Activated CD4-positive, alpha-beta T cell treated with anti-CD3 and anti-CD28 coated beads, Interleukin-2, amount 10 ng/mL, durations not matched to agents 24 days and 14 days (primary cell): ENCODE measurements at regions of chrX and their contacts with region 1.

Region 1: DNA sequence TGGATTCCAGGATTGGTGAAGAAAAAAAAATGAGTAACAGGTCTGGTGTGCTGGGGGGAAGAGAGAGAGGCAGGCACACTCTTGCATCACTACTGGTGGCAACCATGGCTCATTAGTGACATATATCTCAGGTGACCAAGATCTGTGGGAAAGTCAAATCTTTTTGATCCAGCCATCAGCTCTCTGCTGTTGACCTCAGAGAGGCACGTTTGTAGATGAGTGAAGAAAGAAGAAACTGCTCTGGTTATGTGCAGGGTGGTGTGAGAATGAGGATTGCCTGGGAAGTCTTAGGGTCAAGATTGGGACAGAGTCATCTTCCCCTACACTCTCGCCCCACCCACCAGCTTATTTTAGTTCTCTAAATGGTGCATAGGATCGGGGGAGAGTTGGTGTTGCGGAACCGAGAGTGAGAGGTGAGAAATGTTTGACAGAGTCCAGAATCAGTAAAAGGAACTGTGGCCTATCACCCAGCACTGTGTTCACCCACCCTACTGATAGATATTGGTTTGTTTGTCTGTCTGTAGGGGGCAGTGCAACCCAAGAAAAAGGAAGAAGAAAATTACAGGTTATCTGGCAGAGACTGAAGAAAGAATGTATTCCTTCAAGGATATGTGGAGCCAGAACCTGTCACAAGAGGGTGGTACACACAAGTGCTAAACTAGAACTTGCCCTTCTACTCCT is 21.9 kb downstream of the ARMCX6 start:
- DNase-seq: peak; percentile 82
- H3K4me3 Mint-ChIP-seq: no peak overlapping the region
- H3K27ac Mint-ChIP-seq: no peak overlapping the region
- H3K4me1 Mint-ChIP-seq: peaks cover 2% of the 10 kb centered on the region
- H3K27me3 Mint-ChIP-seq: peaks cover 5% of the 10 kb centered on the region

Region 2: GRCh38 chrX:101415180-101416145 is 180.4 kb before region 1 on chrX:
- intact Hi-C with region 1: loop called (anchors 5 kb)
- DNase-seq: peak; percentile 83
- H3K4me3 Mint-ChIP-seq: peak overlapping the region; percentile 56
- H3K27ac Mint-ChIP-seq: peak overlapping the region; percentile 86
- H3K4me1 Mint-ChIP-seq: peaks cover 38% of the 10 kb centered on the region
- H3K27me3 Mint-ChIP-seq: no peaks in the 10 kb centered on the region

Region 3: DNA sequence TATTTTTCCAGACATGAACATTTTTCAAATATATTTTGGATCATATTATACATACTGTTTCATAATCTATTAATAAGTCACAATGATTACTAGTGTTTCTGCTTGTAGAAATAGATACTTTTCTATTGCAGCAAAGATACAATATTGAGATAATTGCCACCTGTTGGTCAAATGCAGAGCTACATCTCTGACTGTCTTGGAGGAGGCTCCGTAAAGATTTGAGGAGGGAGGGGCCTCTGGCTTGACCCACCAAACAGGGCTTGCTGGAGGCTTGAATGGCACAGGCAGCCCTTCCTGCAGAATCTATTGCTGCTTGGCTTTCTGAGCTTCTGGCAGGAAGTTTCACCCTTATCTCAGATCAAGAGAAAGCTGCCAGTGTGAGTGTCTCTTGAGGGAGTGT is 163.1 kb after region 1 on chrX:
- intact Hi-C with region 1: loop called (anchors 5 kb)
- DNase-seq: peak; percentile 75
- H3K4me3 Mint-ChIP-seq: no peak overlapping the region
- H3K27ac Mint-ChIP-seq: no peak overlapping the region
- H3K4me1 Mint-ChIP-seq: peaks cover 3% of the 10 kb centered on the region
- H3K27me3 Mint-ChIP-seq: peaks cover 6% of the 10 kb centered on the region

Region 4: DNA sequence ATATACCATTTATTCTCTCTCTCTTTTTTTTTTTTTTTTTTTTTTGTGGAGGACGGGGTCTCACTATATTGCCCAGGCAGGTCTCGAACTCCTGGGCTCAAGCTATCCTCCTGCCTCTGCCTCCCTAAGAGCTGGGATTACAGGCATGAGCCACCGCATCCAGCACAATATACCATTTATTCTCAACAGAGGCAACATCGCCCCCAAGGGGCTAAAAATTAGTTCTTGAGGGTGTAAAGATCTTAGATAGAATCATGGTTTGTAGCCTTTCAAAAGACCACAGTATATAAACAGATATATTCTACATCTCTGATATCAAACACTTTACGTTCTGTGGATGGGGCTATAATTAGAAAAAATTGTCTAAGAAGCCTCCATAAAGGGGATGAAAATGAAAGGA is 489.8 kb after region 1 on chrX:
- intact Hi-C with region 1: loop called (anchors 5 kb)
- DNase-seq: no peak
- H3K4me3 Mint-ChIP-seq: no peak overlapping the region
- H3K27ac Mint-ChIP-seq: no peak overlapping the region
- H3K4me1 Mint-ChIP-seq: no peaks in the 10 kb centered on the region
- H3K27me3 Mint-ChIP-seq: no peaks in the 10 kb centered on the region